Lower leg skin (tissue), 4 donors: ENCODE measurements at regions of chr5 and their contacts with region 1.

Region 1: DNA sequence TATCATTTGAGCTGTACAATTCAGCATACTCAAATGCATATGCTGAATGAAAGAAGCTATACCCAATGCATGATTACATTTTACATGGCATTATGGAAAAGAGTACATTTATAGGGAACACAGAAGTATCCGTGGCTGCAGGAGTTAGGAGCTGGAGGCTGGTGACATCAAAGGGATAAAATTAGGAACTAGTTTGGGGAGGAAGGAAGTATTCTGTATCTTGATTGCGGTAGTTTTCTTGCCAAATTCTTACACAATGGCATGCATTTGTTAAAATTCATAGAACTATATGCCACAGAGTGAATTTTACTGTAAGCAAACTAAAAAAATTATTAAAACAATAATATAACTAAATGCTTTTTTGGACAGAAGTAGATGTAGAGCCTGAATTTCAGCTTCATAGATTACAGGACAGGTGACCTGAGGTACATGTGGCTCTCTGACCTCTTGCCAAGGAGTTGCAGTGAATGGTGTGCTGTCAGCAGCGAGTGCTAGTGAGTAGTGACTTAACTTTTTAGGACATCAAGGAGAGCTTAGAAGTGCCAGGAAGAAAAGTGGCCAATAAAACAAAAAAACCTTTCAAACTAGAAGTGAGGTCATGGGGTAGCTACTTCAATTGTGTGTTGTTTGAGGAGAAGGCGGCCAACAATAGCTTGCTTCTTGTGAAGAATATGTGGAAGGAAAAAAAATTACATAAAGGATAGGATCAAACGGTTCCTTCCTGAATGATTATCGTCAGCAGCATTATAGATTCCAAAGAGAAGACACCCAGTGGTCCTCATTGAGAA is 514.9 kb upstream of the CLINT1 start:
- DNase-seq: no peak
- H3K4me3 ChIP-seq: no peak overlapping the region
- CTCF ChIP-seq: no peak
- POLR2A ChIP-seq: no peak

Region 2: DNA sequence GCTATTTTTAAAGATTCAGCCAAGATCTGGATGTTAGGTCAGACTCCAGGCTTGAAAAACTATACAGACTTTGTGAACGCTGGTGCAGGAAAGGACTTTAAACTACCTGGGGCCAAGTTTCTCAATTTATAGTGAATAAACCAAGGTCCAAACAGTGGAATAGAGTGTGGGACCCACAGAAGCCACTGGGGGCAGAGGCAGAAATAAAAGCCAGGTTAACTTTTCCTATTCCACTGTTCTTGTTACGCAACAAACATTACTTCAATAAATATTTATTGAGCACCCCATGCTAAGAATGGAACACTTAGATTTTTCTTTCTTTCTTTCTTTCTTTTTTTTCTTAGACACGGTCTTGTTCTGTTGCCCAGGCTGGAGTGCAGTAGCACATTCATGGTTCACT is 1303.9 kb before region 1 on chr5:
- intact Hi-C with region 1: loop called (anchors 10 kb)
- DNase-seq: no peak
- H3K4me3 ChIP-seq: no peak overlapping the region
- CTCF ChIP-seq: no peak
- POLR2A ChIP-seq: no peak